ENCODE measurements at regions of chr13 and their contacts with region 1.

Region 1: GRCh38 chr13:97432917-97433726 is 847 bp upstream of the RAP2A start:
- DNase-seq: peak; percentile 100
- H3K4me3 Mint-ChIP-seq: peak overlapping the region; percentile 85
- H3K27ac Mint-ChIP-seq: peak overlapping the region; percentile 91
- H3K4me1 Mint-ChIP-seq: peaks cover 28% of the 10 kb centered on the region
- H3K27me3 Mint-ChIP-seq: no peaks in the 10 kb centered on the region
- CTCF ChIP-seq: no peak

Region 2: GRCh38 chr13:95676762-95677563 is 1756.2 kb before region 1 on chr13 and contains the start of gene DNAJC3:
- CTCF ChIA-PET with region 1: no interaction called
- POLR2A ChIA-PET with region 1: interaction called, 23 read pairs
- intact Hi-C with region 1: no loop called
- DNase-seq: peak; percentile 99
- H3K4me3 Mint-ChIP-seq: peak within 1 kb of the TSS; percentile 90
- H3K27ac Mint-ChIP-seq: peak within 1 kb of the TSS; percentile 94
- H3K4me1 Mint-ChIP-seq: peaks cover 52% of the 10 kb centered on the region
- H3K27me3 Mint-ChIP-seq: no peaks in the 10 kb centered on the region
- CTCF ChIP-seq: no peak
- total RNA-seq, gene DNAJC3: 113 and 132 TPM in 2 replicates

Region 3: DNA sequence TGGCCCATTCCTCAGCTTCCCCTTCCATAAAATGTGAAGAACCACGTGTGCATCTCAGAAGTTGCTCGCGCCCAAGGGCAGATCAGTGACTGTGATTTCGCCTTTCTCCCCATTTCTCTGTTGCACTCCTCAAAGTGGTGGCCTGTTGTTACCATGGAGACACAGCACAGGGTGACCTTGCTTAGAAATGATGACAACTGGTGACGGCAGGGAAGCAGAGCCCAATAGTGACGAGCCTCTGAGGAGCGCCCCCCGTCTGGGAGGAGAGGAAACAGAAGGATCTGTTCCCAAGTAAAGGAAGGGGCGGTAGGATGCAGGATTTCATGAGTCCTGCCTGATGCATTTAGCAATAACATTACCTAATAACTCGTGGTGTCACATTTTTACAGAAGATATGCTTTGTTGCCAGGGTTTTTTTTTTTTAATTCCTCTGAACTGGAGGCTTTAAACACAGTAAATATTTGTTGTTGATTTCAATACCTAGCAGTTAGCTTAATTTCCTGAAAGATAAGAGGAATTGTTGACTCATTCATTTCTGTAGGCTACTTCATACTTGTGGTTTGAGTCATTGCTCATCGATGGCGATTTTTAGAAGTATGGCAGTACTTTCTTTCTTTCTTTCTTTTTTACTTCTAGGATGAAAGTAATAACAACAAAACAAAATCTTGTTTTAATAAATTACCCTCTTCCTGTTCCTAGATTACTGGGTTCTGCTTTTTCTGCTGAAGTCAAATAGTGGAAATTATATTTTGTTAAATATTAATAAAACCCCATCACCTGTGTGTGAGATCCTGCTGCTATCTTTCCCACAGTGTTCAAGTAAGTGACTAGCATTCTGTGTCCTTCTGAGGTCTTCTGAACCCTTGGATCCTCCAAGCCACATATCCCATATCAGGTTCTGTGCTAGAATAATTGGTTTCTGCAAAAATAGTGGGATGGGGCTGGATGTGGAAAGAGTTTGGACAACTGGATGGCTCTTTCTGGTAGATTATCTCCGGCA is 175.0 kb before region 1 on chr13:
- CTCF ChIA-PET with region 1: no interaction called
- POLR2A ChIA-PET with region 1: interaction called, 14 read pairs
- intact Hi-C with region 1: no loop called
- DNase-seq: peak; percentile 83
- H3K4me3 Mint-ChIP-seq: peak overlapping the region; percentile 56
- H3K27ac Mint-ChIP-seq: peak overlapping the region; percentile 96
- H3K4me1 Mint-ChIP-seq: peaks cover 74% of the 10 kb centered on the region
- H3K27me3 Mint-ChIP-seq: no peaks in the 10 kb centered on the region
- CTCF ChIP-seq: no peak

Region 4: DNA sequence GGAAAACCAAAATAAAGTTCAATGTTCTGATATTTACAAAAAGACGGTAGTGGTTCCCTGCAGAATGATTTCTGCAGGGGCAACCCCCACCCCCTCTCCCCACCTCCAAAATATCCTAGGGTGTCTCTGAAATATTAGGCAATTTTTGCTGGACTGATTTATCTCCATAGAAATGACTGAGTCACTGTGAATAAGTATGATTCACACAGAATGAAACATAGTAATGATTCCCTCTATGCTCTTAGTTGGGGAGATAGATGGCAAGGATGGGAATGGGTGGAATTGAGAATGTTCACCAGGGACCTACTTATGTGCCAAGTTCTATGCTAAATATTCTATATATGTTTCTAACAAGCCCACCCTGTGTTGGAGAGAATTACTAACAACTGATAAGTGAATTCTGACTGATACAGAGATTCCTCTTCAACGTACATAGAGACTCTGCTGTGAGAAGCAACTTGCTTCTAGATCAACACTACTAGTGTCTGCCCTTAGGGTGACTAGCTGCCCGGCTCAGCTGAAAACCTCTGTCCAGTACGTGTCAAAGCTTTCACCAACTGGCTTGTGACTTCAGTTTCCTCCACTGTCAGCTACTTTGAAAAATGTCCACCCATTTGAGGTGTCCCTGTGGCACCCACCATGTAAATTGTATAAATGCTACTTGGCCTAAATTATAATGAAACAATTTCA is 37.5 kb before region 1 on chr13:
- CTCF ChIA-PET with region 1: interaction called, 3 read pairs
- POLR2A ChIA-PET with region 1: interaction called, 11 read pairs
- intact Hi-C with region 1: loop called (anchors 2 kb)
- DNase-seq: peak; percentile 61
- H3K4me3 Mint-ChIP-seq: no peak overlapping the region
- H3K27ac Mint-ChIP-seq: peak overlapping the region; percentile 20
- H3K4me1 Mint-ChIP-seq: peaks cover 8% of the 10 kb centered on the region
- H3K27me3 Mint-ChIP-seq: no peaks in the 10 kb centered on the region
- CTCF ChIP-seq: no peak

Region 5: DNA sequence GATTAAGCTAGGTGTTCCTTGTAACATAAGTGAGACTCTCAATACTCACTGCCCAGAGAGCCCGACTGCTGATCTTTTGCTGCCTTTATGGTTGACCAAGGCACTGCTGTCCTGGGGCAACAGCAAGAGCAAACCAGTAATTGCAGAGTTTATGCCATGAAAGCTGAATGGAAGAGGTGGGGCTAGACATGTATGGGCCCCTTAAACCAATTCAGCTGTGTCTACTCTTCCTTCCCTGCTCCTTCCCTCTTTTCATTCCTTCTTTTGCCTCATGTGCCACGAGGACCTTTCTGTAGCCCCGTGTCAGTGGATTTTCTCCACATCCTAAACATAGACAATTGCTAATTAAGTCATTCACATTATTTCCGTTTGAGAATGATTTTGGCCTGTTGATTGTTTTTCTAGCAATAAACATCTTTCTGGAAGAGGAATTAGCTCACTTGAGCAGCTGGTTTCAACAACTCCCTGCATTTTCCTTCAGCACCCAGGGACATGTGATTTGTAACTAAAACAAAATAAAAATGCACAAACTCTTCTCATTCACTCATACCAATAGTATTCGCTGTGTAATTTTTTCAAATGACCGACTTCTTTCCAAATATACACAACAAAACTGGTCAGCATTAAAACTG is 41.3 kb after region 1 on chr13:
- CTCF ChIA-PET with region 1: no interaction called
- POLR2A ChIA-PET with region 1: no interaction called
- intact Hi-C with region 1: no loop called
- DNase-seq: no peak
- H3K4me3 Mint-ChIP-seq: no peak overlapping the region
- H3K27ac Mint-ChIP-seq: no peak overlapping the region
- H3K4me1 Mint-ChIP-seq: no peaks in the 10 kb centered on the region
- H3K27me3 Mint-ChIP-seq: no peaks in the 10 kb centered on the region
- CTCF ChIP-seq: no peak

Region 6: DNA sequence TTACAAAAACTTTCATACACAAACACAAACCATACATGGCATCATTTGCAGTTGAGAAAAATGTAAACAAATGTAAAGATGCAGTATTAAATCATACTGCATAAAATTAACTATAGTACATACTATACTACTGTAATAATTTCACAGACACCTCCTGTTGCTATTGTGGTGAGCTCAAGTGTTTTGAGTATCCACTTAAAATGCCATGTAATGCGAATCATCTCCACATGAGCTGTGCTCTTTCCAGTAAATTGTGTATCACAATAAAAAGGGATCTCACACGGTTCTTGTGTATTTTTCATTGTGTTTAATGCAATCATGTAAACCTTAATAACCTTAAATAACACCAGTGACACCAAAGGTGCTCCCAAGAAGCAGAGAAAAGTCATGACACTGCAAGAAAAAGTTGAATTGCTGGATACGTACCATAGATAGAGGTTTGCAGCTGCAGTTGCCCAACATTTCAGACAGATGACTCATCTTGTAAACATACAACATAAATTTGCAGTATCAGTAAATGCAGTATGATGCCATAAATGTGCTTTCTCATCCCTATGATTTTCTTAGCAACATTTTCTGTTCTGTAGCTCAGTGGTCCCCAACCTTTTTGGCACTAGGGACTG is 167.4 kb after region 1 on chr13:
- CTCF ChIA-PET with region 1: no interaction called
- POLR2A ChIA-PET with region 1: interaction called, 11 read pairs
- intact Hi-C with region 1: no loop called
- DNase-seq: peak; percentile 83
- H3K4me3 Mint-ChIP-seq: no peak overlapping the region
- H3K27ac Mint-ChIP-seq: no peak overlapping the region
- H3K4me1 Mint-ChIP-seq: no peaks in the 10 kb centered on the region
- H3K27me3 Mint-ChIP-seq: no peaks in the 10 kb centered on the region
- CTCF ChIP-seq: no peak

Region 7: DNA sequence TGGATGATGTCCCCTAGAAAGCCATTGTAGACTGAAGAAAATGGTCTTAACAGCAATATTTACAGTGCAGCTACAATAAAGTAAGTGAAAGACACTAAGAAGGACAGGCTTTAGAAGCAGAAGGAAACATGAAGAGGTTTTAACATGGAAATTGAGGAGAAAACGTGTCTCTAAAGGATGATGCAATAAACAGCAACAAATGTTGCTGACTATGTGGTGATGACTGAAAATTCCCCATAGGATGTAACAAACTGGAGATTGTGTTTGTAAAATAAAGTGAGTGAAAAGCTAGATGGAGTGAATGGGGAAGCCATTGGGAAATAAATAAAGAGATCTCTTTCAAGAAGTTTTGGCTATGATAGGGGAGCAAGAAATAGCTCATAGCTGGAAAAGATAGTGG is 333.6 kb after region 1 on chr13:
- CTCF ChIA-PET with region 1: no interaction called
- POLR2A ChIA-PET with region 1: no interaction called
- intact Hi-C with region 1: no loop called
- DNase-seq: no peak
- H3K4me3 Mint-ChIP-seq: no peak overlapping the region
- H3K27ac Mint-ChIP-seq: peak overlapping the region; percentile 3
- H3K4me1 Mint-ChIP-seq: peaks cover 10% of the 10 kb centered on the region
- H3K27me3 Mint-ChIP-seq: no peaks in the 10 kb centered on the region
- CTCF ChIP-seq: no peak

Region 8: GRCh38 chr13:98397221-98397620 is 964.1 kb after region 1 on chr13:
- CTCF ChIA-PET with region 1: no interaction called
- POLR2A ChIA-PET with region 1: no interaction called
- intact Hi-C with region 1: no loop called
- DNase-seq: no peak
- H3K4me3 Mint-ChIP-seq: no peak overlapping the region
- H3K27ac Mint-ChIP-seq: no peak overlapping the region
- H3K4me1 Mint-ChIP-seq: no peaks in the 10 kb centered on the region
- H3K27me3 Mint-ChIP-seq: no peaks in the 10 kb centered on the region
- CTCF ChIP-seq: no peak